ENCODE measurements at regions of chr11 and their contacts with region 1.

Region 1: GRCh38 chr11:134050541-134051383 is 18.1 kb upstream of the JAM3 start:
- DNase-seq: peak; percentile 33
- ATAC-seq: peak; percentile 94
- H3K4me3 ChIP-seq: no peak overlapping the region; a peak in 1 of 4 replicates
- H3K27ac ChIP-seq: no peak overlapping the region
- H3K4me1 ChIP-seq: peaks cover 0 to 8% of the 10 kb centered on the region in 2 experiments; a peak in 1 of 4 replicates
- H3K27me3 ChIP-seq: 0 out of 2 replicates have a peak, but pooled peaks cover 7% of the 10 kb centered on the region
- CTCF ChIP-seq: peak; percentile 82 to 88 (median 84); a peak in 5 of 6 replicates
- POLR2A ChIP-seq: no peak
- RAD21 ChIP-seq: peak; percentile 89

Region 2: DNA sequence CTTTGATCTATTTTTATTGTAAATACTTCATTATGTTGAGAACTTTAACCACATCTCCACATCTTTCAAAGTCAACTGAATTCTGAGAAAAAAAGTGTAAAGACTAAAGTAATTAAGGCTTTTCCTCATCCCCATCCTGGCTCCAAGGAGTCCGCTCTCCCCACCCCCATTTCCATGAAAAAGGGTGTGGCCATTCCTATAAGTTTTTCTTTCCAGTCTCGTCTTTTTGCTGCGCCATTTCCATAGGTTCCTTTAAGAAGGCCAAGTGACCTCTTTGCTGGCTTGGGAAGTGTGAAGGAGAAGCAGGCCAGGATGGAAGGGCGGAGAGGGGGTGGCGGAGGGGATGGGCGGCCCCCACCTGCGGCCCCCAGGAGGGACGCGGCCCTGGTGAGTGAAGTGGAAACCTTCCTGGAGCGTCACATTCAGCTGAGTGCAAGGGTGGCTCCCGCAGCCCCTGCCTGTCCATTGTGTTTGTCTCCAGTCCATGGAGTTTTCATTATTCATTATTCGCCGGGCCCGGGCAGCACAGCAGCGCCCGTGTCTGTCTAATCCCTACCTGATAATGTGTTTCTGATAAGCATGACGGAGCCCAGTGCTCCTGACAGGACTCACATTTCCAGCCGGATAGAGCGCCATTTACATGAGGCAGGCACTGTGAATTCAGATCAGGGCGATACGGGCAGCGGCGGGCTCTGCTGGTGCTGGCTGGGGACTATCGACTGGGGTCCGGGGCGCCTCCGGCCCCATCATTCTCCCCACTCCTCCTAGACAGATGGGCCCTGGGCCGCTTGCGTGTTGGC is 1258.2 kb before region 1 on chr11:
- CTCF ChIA-PET with region 1: no interaction called
- POLR2A ChIA-PET with region 1: no interaction called
- RAD21 ChIA-PET with region 1: no interaction called
- intact Hi-C with region 1: no loop called
- DNase-seq: no peak
- ATAC-seq: no peak
- H3K4me3 ChIP-seq: no peak overlapping the region
- H3K27ac ChIP-seq: no peak overlapping the region
- H3K4me1 ChIP-seq: no peaks in the 10 kb centered on the region
- H3K27me3 ChIP-seq: no peaks in the 10 kb centered on the region
- CTCF ChIP-seq: no peak
- POLR2A ChIP-seq: no peak
- RAD21 ChIP-seq: no peak

Region 3: DNA sequence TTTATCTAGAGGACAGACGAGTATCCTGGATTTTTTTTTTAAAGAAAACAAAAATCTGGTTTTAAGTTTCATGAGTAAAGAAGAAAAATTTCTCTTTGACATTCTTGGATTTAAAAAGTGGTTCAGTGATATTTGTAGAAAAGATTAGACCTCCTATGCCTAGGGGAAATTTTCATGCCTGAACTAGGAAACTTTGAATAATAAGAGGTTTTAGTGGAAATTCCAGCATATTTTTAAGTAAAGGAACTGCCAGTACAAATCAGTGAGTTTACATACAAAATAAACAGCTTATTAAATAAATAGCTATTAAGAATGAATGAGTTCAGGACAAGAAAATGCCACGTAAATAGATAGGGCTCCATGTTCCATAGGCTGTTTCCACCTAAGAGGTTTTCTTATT is 35.6 kb after region 1 on chr11:
- CTCF ChIA-PET with region 1: no interaction called
- POLR2A ChIA-PET with region 1: no interaction called
- RAD21 ChIA-PET with region 1: no interaction called
- intact Hi-C with region 1: no loop called
- DNase-seq: no peak
- ATAC-seq: no peak
- H3K4me3 ChIP-seq: no peak overlapping the region
- H3K27ac ChIP-seq: no peak overlapping the region
- H3K4me1 ChIP-seq: no peaks in the 10 kb centered on the region
- H3K27me3 ChIP-seq: peaks cover 35% of the 10 kb centered on the region
- CTCF ChIP-seq: no peak
- POLR2A ChIP-seq: no peak
- RAD21 ChIP-seq: no peak

Region 4: DNA sequence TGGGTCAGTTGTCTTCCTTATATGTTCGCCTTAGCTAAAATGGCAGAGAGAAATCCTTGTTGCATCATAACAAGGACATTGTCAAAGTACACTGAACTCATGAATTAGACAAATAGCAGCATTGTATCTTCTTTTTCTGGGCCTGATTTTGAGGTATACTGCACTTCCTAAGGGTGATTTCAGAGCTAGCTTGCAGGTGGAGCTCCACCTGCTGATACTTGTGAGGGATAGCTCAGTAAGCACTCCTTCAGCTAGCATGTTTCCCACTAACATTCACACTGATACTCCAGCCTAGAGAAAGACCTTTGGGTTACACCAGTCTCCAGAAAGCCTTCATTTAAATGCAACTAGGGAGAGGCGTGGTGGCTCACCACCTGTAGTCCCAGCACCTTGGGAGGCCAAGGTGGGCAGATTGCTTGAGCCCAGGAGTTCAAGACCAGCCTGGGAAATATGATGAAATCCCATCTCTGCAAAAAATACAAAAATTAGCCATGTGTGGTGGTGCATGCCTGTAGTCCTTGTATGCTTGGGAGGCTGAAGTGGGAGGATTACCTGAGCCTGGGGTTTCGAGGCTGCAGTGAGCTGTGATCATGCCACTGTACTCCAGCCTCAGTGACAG is 47.9 kb after region 1 on chr11:
- CTCF ChIA-PET with region 1: interaction called, 34 read pairs
- POLR2A ChIA-PET with region 1: no interaction called
- RAD21 ChIA-PET with region 1: interaction called, 4 to 6 read pairs
- intact Hi-C with region 1: loop called (anchors 1 kb)
- DNase-seq: peak; percentile 27
- ATAC-seq: peak; percentile 97
- H3K4me3 ChIP-seq: no peak overlapping the region
- H3K27ac ChIP-seq: no peak overlapping the region
- H3K4me1 ChIP-seq: no peaks in the 10 kb centered on the region
- H3K27me3 ChIP-seq: peaks cover 22% of the 10 kb centered on the region; the same call in 1 of the 2 replicates
- CTCF ChIP-seq: peak; percentile 50 to 57 (median 53); a peak in 5 of 6 replicates
- POLR2A ChIP-seq: no peak
- RAD21 ChIP-seq: peak; percentile 49

Region 5: GRCh38 chr11:134139873-134140331 is 89.1 kb after region 1 on chr11:
- CTCF ChIA-PET with region 1: interaction called, 12 read pairs
- POLR2A ChIA-PET with region 1: no interaction called
- RAD21 ChIA-PET with region 1: interaction called in 1 of 2 experiments, 3 read pairs
- intact Hi-C with region 1: loop called (anchors 1 kb)
- DNase-seq: peak; percentile 62
- ATAC-seq: peak; percentile 96
- H3K4me3 ChIP-seq: no peak overlapping the region
- H3K27ac ChIP-seq: no peak overlapping the region
- H3K4me1 ChIP-seq: no peaks in the 10 kb centered on the region; a peak in 1 of 4 replicates
- H3K27me3 ChIP-seq: peaks cover 13% of the 10 kb centered on the region
- CTCF ChIP-seq: peak; percentile 74 to 84 (median 83); a peak in 5 of 6 replicates
- POLR2A ChIP-seq: no peak
- RAD21 ChIP-seq: peak; percentile 82